ENCODE measurements at regions of chr16 and their contacts with region 1.

Region 1: DNA sequence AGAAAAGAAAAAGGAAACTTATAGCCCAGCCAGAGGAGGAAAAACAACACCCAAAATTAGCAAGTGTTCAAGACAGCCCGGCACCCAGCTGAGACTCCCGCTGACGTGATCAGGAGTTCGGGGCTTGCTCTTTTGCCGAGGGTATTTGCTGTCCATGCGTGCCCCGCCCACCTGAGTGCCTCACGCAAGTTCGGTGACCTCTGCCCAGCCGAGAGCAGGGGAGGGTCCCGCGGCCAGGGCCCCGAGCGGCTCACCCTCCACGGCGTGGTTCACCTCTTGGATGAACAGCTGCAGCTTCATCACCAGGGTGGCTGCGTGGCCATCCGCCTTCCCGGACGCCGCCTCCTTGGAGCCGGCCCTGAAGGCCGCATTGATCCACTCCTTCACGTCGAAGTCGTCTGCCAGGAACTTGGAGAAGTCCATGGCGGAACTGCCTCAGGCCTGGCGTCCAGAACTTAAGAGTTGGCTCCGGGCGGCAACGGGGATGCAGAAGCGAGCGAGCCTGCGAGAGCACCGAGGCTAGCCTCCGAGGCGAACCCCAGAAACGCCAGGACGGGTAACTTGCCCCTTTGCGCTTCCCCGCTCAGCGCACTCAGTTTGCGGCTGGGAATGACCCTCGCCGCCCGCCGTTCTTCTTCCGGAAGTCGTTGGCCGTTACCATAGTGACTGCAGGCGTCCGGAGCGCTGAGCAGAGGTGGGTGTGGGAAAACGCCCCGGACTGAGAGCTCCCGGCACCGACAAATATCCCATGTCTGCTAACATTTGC is at the start of gene COG7:
- DNase-seq: peak; percentile 39 to 89
- H3K4me3 ChIP-seq: peak within 1 kb of the TSS; percentile 89 to 94
- H3K27ac ChIP-seq: peak within 1 kb of the TSS; percentile 61 to 72
- H3K4me1 ChIP-seq: peaks cover 6 to 14% of the 10 kb centered on the region in 2 donors
- H3K27me3 ChIP-seq: no peaks in the 10 kb centered on the region
- CTCF ChIP-seq: no peak
- total RNA-seq, gene COG7: 25.9 TPM

Region 2: GRCh38 chr16:23060458-23061320 is 392.1 kb before region 1 on chr16:
- intact Hi-C with region 1: no loop called
- DNase-seq: peak in 1 of 2 donors; percentile 77
- H3K4me3 ChIP-seq: no peak overlapping the region
- H3K27ac ChIP-seq: no peak overlapping the region
- H3K4me1 ChIP-seq: peaks cover 0 to 2% of the 10 kb centered on the region in 2 donors
- H3K27me3 ChIP-seq: no peaks in the 10 kb centered on the region
- CTCF ChIP-seq: peak; percentile 60 to 84 (median 61)

Region 3: DNA sequence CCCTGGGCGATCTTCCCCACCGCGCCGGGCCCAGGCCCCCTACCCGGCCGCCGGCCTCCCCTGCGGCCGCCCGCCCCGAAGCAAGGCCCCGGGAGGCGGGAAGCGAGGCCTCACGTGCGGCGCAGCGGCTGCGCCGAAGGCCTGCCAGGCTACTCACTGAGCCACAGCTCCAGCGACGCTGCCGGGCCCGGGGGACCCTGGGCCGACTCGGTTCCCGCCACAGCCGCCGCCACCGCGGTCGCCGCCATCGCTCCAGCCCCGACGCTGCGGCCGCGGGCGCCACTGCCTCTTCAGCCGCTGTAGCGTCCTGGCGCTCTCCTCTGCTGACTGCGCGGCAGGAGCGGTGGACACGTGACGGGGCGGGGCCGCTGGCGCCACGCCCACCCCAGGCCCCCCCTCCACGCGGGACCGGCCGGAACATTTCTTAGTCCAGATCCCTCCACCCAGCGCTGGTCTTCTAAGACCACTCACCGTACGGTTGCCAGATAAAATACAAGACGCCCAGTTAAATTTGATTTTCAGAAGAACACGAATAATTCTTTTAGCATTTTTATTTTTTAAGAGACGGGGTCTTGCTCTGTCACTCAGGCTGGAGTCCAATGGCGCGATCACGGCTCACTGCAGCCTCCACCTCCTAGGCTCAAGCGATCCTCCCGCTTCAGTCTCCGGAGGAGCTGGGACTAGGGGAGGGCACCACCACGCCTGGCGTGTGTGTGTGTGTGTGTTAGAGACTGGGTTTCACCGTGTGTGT is 57.6 kb after region 1 on chr16 and contains the start of gene GGA2:
- intact Hi-C with region 1: loop called (anchors 2 kb)
- DNase-seq: peak; percentile 46 to 92
- H3K4me3 ChIP-seq: peak within 1 kb of the TSS; percentile 95 to 98
- H3K27ac ChIP-seq: peak within 1 kb of the TSS; percentile 59 to 92
- H3K4me1 ChIP-seq: peaks cover 0 to 10% of the 10 kb centered on the region in 2 donors
- H3K27me3 ChIP-seq: no peaks in the 10 kb centered on the region
- CTCF ChIP-seq: no peak
- total RNA-seq, gene GGA2: 10.7 TPM

Region 4: DNA sequence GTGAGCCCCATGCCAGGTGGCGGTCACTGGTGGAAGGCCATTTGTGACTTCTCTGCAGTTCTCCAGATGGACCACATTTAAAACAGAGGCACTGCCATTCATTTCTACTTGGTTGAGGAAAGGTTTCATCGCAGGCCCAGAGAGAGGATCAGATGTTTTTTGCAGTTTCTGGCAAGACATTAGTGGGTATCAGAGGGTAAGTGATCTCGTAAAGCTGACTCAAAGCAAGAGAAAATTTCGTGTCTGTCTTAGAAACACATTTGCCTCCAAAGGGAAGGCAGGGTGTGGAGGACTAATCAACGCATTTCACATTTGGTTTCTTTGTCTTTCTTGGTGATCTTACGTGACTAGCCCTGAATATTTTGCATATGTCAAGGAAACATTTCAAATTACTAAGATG is 464.9 kb after region 1 on chr16:
- intact Hi-C with region 1: no loop called
- DNase-seq: no peak
- H3K4me3 ChIP-seq: no peak overlapping the region
- H3K27ac ChIP-seq: no peak overlapping the region
- H3K4me1 ChIP-seq: no peaks in the 10 kb centered on the region
- H3K27me3 ChIP-seq: no peaks in the 10 kb centered on the region
- CTCF ChIP-seq: no peak

Measured in ascending aorta (tissue), 2 donors.